Dorsolateral prefrontal cortex (tissue), 120 donors: ENCODE measurements at regions of chr9 and their contacts with region 1.

Region 1: DNA sequence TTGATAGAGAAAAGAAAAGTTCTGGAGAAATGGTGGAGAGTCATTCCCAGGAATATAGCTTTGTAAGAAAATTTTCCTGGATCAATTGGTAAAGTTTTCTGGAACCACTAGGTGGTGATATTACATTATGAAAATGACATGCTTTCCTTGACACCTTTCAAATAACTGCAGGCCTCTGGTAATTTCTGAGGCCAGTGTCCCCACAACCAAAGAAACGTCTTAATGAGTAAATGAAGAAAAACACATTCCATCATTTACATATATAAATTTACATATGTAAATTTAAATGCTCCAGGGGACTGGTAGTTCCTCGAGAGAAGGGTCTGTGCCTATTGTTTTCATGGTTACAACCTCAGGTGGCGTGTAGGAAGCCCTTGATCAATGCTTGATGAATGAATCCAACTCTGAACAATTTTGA is 17.2 kb upstream of the RGS3 start:
- DNase-seq: no peak
- H3K4me3 ChIP-seq: no peak overlapping the region
- H3K27ac ChIP-seq: peak overlapping the region in 1 of 59 donors; percentile 46
- H3K27me3 ChIP-seq: no peaks in the 10 kb centered on the region
- CTCF ChIP-seq: peak; percentile 66 to 96 (median 84)

Region 2: GRCh38 chr9:113530022-113530635 is 83.8 kb after region 1 on chr9:
- intact Hi-C with region 1: loop called in 1 of 2 experiments (anchors 5 kb)
- DNase-seq: no peak
- H3K4me3 ChIP-seq: no peak overlapping the region
- H3K27ac ChIP-seq: no peak overlapping the region
- H3K27me3 ChIP-seq: no peaks in the 10 kb centered on the region
- CTCF ChIP-seq: no peak

Region 3: DNA sequence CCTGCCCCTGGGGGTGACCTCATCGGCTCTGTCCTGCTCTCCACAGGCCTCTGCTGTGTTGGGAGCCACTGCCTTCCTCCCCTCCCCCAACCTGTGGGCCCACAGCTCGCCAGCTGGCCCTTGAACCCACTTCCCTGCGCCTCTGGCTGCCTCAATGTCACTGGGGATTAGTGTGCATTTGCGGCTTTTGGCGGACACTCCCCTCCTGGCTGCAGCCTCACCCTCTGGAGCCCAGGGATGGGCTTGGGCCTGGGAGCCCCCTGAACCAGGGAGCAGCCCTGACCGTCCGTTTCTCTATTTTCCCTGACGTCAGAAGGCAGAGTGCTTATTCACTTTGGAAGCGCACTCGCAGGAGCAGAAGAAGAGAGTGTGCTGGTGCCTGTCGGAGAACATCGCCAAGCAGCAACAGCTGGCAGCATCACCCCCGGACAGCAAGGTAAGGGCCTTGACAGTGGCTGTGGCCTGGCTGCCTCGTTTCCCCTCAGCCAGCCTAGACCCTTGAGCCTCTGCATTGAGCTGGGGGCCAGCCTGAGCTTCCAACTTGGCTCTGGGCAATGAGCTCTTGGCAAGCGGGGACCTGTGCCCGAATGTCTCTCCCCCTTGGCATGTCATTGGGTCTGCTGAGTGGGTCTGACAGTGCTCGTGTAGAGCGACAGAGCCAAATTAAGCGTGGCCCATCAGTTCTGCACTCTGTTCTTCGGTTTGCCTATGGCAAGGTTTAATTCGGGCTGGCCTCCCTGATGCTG is 90.3 kb after region 1 on chr9:
- intact Hi-C with region 1: loop called (anchors 2 to 5 kb)
- DNase-seq: peak; percentile 37 to 98 (median 94)
- H3K4me3 ChIP-seq: peak overlapping the region; percentile 10 to 80 (median 54)
- H3K27ac ChIP-seq: peak overlapping the region; percentile 71 to 99 (median 95)
- H3K27me3 ChIP-seq: no peaks in the 10 kb centered on the region
- CTCF ChIP-seq: peak in 11 of 56 donors; percentile 4 to 47 (median 22)

Region 4: GRCh38 chr9:113581865-113582697 is 135.7 kb after region 1 on chr9:
- intact Hi-C with region 1: loop called (anchors 2 to 5 kb)
- DNase-seq: peak in 9 of 10 donors; percentile 71 to 89 (median 86)
- H3K4me3 ChIP-seq: peak overlapping the region in 24 of 59 donors; percentile 2 to 31 (median 16)
- H3K27ac ChIP-seq: peak overlapping the region in 58 of 59 donors; percentile 48 to 95 (median 89)
- H3K27me3 ChIP-seq: no peaks in the 10 kb centered on the region
- CTCF ChIP-seq: peak in 55 of 56 donors; percentile 37 to 85 (median 59)

Region 5: DNA sequence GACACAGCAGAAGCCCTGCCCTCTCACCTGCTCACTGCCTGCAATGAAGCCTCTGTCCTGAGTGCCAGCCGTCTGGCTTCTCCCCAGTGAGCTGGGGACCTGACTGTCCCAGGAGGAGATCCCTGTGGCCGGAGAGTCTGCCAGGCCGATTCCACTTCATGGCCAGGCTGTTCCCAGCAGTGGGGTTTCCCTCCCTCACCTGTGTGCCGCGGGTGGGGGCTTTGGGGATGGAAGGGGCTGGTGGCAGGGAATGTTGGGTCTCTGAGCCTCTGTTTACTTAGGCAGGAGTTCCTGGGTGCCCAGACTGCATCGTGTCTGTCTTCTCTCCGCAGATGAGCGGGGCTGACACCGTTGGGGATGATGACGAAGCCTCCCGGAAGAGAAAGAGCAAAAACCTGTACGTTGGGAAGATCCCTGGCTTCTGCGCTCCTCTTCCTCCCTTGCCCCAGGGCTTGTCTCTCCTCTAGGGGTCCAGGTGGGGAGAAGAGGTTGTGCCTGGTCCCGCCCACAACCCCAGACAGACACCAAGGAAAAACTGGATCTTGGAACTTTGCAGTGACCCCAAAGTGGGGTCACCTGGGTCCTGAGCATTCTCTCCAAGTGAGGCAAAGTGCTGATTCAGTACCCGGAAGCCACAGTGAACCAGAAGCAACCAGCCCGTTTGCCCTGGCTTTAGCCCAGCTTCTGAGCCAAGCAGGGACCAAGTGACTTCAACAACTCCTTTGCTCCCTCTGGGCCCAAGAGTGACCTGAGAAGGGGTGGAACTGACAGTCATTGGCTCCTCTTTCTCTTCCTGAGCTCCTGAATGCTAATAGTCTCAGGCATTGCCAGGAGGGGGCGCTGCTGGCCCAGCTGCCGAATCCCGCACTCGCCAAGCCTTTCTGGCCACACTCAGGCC is 144.9 kb after region 1 on chr9:
- intact Hi-C with region 1: loop called in 1 of 2 experiments (anchors 2 kb)
- DNase-seq: peak; percentile 44 to 92 (median 86)
- H3K4me3 ChIP-seq: no peak overlapping the region
- H3K27ac ChIP-seq: peak overlapping the region in 35 of 59 donors; percentile 0 to 69 (median 38)
- H3K27me3 ChIP-seq: no peaks in the 10 kb centered on the region
- CTCF ChIP-seq: peak; percentile 79 to 99 (median 95)

Region 6: DNA sequence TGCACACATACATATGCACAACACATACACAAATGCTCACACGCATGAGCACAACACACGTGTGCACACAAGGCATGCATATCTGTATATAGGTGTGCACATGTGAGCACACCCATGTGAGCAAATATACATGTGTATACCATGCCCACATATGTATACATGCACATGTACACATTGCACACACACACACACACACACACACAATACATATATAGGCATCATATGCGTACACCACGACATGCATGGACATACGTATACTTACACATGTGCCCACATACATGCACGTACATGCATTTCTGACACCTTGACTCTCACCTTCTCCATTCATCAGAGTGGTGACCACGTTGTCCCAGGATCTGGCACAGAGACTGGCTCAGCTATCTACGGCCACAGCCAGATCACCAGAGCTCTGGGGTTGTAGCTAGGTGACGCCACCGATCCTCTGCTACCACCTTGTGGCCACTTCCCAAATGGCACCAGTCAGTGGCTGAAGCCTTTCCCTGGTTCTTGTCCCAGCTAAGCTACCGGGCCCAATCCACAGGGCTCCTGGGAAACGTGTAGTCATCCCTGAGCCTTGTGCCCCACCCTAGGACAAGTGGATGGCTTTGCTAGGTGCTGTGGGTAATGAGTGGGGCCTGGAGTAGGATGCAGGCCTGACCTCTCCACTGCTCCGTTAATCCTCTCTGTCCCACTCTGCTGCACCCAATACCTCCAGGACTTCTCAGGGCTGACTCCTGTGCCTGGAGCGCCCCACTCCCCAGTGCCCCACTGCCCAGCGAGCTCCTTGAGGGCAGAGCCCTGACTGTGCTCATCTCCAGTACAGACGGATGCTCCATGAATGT is 211.6 kb after region 1 on chr9:
- intact Hi-C with region 1: loop called (anchors 2 kb)
- DNase-seq: peak; percentile 79 to 89 (median 86)
- H3K4me3 ChIP-seq: no peak overlapping the region
- H3K27ac ChIP-seq: no peak overlapping the region
- H3K27me3 ChIP-seq: peaks cover 0 to 15% (median 0%) of the 10 kb centered on the region in 45 donors
- CTCF ChIP-seq: peak; percentile 82 to 99 (median 97)

Region 7: DNA sequence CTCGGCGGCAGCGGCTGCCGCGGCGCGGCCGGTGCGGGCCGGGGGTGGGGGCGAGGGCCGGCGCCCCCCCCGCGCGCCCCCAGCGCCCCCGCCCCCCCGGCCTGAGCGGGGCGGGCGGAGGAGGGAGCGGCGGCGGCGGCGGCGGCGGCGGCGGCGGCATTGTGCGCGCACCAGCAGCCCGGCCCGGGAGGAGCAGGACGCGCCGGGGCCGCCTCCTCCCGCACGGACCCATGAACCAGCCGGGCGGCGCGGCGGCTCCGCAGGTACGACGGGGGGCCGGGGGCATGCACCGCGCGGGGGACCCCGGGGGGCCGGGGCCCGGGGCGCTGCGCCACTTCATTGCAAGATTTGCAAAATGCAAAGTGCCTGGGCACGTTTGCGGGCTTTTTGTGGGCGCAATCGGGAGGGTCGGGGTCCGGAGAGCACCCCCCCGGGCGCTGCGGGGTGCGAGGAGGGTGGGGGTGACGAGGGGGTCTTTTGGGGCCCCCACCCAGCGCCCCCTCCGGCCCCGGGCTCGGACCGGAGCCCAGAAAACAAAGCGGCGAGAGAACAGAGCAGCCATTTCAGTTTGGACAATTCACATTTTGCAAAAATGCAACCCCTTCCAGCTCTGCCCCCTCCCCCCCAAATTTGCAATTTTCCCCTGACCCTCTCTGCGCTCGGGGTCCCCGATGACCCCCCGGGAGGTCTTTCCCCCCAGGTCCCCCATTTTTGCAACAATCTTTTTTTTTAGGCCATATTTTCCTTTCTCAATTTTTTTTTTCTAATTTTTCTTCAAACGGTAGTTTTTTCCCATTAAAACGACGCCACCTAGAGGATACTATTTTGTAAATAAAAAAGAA is 430.0 kb after region 1 on chr9 and contains the start of gene ZNF618:
- intact Hi-C with region 1: no loop called
- DNase-seq: peak in 4 of 10 donors; percentile 25 to 54 (median 47)
- H3K4me3 ChIP-seq: peak within 1 kb of the TSS; percentile 66 to 92 (median 83)
- H3K27ac ChIP-seq: peak within 1 kb of the TSS in 34 of 59 donors; percentile 12 to 86 (median 68)
- H3K27me3 ChIP-seq: no peaks in the 10 kb centered on the region
- CTCF ChIP-seq: peak in 54 of 56 donors; percentile 5 to 78 (median 59)
- total RNA-seq, gene ZNF618: 3.2 to 10.5 (median 6.8) TPM

Region 8: GRCh38 chr9:114452219-114453165 is 1006.2 kb after region 1 on chr9:
- intact Hi-C with region 1: no loop called
- DNase-seq: peak in 2 of 10 donors; percentile 8 to 17
- H3K4me3 ChIP-seq: no peak overlapping the region
- H3K27ac ChIP-seq: peak overlapping the region in 7 of 59 donors; percentile 0 to 55 (median 30)
- H3K27me3 ChIP-seq: no peaks in the 10 kb centered on the region
- CTCF ChIP-seq: no peak